ENCODE measurements at regions of chr1 and their contacts with region 1.

Region 1: GRCh38 chr1:35715568-35716002 is 3.1 kb downstream of the C1orf216 start:
- DNase-seq: peak; percentile 57 to 67
- H3K4me3 ChIP-seq: no peak overlapping the region
- H3K4me3 Mint-ChIP-seq: no peak overlapping the region
- H3K27ac Mint-ChIP-seq: no peak overlapping the region
- H3K4me1 ChIP-seq: no peaks in the 10 kb centered on the region; the same call in 1 of the 2 replicates
- H3K4me1 Mint-ChIP-seq: peaks cover 22% of the 10 kb centered on the region
- H3K27me3 ChIP-seq: no peaks in the 10 kb centered on the region
- H3K27me3 Mint-ChIP-seq: no peaks in the 10 kb centered on the region
- CTCF ChIP-seq: peak; percentile 60 to 73

Region 2: DNA sequence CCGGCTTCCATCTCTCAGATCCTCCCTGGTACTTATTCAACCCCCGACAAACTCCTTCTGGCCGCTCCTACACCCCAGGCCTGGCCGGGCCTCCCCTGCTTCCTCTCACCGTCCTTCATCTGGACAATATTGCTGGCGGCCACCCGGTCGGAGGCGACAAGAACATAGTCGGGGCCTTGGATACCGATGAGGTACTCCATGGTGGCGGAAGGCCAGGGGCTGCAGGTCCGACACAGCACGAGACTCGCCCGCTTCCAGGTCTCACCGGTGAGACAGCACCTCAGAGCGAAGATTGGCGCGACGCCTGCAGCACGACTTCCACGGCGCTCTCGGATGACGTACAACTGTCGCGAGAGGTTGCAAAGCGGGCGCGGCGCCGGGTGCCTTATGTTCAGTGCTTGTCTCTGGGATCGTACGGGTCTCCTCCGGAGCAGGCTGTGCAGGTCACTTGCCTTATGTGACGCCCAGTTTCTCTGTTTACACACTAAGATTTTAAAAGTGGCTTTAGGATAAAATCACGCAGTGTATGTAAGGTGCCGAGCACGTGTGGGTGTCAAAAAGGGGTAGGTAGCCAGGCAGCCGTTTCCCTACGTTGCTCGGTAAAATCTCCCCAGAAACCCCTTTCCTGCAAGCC is 74.2 kb before region 1 on chr1 and contains the start of gene PSMB2:
- CTCF ChIA-PET with region 1: interaction called, 3 read pairs
- POLR2A ChIA-PET with region 1: no interaction called
- intact Hi-C with region 1: loop called (anchors 5 kb)
- DNase-seq: peak; percentile 92 to 93
- H3K4me3 ChIP-seq: peak within 1 kb of the TSS; percentile 80
- H3K4me3 Mint-ChIP-seq: peak within 1 kb of the TSS; percentile 98
- H3K27ac Mint-ChIP-seq: peak within 1 kb of the TSS; percentile 98
- H3K4me1 ChIP-seq: peaks cover 7% of the 10 kb centered on the region; the same call in 1 of the 2 replicates
- H3K4me1 Mint-ChIP-seq: peaks cover 6% of the 10 kb centered on the region
- H3K27me3 ChIP-seq: no peaks in the 10 kb centered on the region
- H3K27me3 Mint-ChIP-seq: peaks cover 6% of the 10 kb centered on the region
- CTCF ChIP-seq: no peak
- total RNA-seq, gene PSMB2: 59.9 and 66.3 TPM in 2 replicates

Region 3: GRCh38 chr1:36083993-36084738 is 368.6 kb after region 1 on chr1 and contains the start of gene TEKT2:
- CTCF ChIA-PET with region 1: no interaction called
- POLR2A ChIA-PET with region 1: no interaction called
- intact Hi-C with region 1: no loop called
- DNase-seq: no peak
- H3K4me3 ChIP-seq: no peak within 1 kb of the TSS
- H3K4me3 Mint-ChIP-seq: no peak within 1 kb of the TSS
- H3K27ac Mint-ChIP-seq: no peak within 1 kb of the TSS
- H3K4me1 ChIP-seq: 0 out of 2 replicates have a peak, but pooled peaks cover 6% of the 10 kb centered on the region
- H3K4me1 Mint-ChIP-seq: no peaks in the 10 kb centered on the region
- H3K27me3 ChIP-seq: no peaks in the 10 kb centered on the region
- H3K27me3 Mint-ChIP-seq: no peaks in the 10 kb centered on the region
- CTCF ChIP-seq: no peak
- total RNA-seq, gene TEKT2: not detected in 2 replicates